Posterior vena cava (tissue), 2 donors: ENCODE measurements at regions of chr19 and their contacts with region 1.

Region 1: DNA sequence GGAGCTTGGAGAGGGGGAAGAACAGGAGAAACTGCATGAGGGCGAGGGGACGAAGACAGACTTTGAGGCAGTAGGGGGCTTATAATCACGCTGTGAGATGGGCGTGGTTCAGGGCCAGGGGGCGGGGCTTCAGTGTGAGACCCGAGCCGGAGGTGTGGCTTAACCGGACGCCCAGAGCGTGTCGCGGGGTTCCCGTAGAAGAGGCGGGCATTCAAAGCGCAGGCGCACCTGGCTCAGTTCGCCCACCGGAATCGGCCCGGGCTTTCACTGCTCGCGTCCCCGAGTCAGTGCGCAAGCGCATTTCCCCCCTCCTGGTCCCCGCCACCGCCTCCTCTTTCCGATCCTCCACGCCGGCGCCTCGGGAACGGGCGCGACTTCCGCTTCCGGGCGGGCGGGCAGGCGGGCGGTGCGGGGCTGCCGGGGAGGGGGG is 225 bp upstream of the ZNF865 start:
- DNase-seq: peak; percentile 99

Region 2: GRCh38 chr19:55516878-55517620 is 88.2 kb before region 1 on chr19:
- intact Hi-C with region 1: loop called (anchors 5 kb)
- DNase-seq: peak; percentile 98